Calu3 (cell line): ENCODE measurements at regions of chr5 and their contacts with region 1.

Region 1: GRCh38 chr5:116766470-116766947 is 191.9 kb upstream of the SEMA6A start:
- DNase-seq: peak; percentile 62
- H3K4me3 Mint-ChIP-seq: peak overlapping the region; percentile 35
- H3K27ac Mint-ChIP-seq: peak overlapping the region; percentile 79
- H3K4me1 Mint-ChIP-seq: peaks cover 34% of the 10 kb centered on the region
- H3K27me3 Mint-ChIP-seq: no peaks in the 10 kb centered on the region
- CTCF ChIP-seq: no peak

Region 2: DNA sequence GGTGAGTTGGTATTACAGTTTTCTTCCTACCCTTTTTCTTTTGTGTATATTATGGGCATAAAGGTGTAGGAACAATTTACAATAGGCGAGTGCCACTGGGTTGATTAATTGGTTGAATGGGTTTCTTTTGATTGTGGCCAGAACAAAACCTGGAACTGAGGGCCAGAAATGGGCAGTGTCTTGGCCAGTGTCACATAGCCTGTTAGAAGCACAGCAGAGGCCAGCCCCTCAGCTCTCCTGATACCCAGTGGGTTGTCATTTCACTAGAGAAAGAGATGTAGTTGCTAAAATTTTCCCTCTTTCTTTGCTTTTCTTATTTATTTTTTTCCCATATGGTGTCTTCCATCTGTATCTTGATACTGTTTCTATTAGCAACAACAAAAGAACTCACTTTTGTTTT is 153.1 kb before region 1 on chr5:
- CTCF ChIA-PET with region 1: no interaction called
- intact Hi-C with region 1: loop called (anchors 10 kb)
- DNase-seq: no peak
- H3K4me3 Mint-ChIP-seq: peak overlapping the region; percentile 52
- H3K27ac Mint-ChIP-seq: peak overlapping the region; percentile 96
- H3K4me1 Mint-ChIP-seq: peaks cover 42% of the 10 kb centered on the region
- H3K27me3 Mint-ChIP-seq: no peaks in the 10 kb centered on the region
- CTCF ChIP-seq: no peak

Region 3: DNA sequence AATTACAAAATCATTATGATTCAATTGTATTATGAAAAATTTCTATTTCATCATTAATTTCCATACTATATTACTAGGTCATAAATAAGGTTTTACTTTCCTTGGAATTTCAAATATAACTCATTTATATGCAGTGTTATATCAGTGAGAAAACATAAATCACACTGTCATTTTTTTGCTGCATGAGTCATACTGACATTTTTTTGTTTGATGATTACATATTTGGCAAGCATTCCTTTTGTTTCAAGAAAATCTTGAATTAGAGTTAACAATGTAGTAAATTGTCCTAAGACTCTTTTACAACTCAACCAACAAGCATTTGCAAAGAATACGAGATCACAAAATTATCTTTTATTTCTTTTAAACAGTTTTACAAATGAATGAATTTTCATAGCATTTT is 106.5 kb after region 1 on chr5:
- CTCF ChIA-PET with region 1: no interaction called
- intact Hi-C with region 1: loop called (anchors 10 kb)
- DNase-seq: no peak
- H3K4me3 Mint-ChIP-seq: no peak overlapping the region
- H3K27ac Mint-ChIP-seq: no peak overlapping the region
- H3K4me1 Mint-ChIP-seq: peaks cover 28% of the 10 kb centered on the region
- H3K27me3 Mint-ChIP-seq: no peaks in the 10 kb centered on the region
- CTCF ChIP-seq: no peak

Region 4: GRCh38 chr5:116947691-116948528 is 181.4 kb after region 1 on chr5:
- CTCF ChIA-PET with region 1: interaction called, 4 read pairs
- intact Hi-C with region 1: loop called (anchors 2 kb)
- DNase-seq: peak; percentile 87
- H3K4me3 Mint-ChIP-seq: no peak overlapping the region
- H3K27ac Mint-ChIP-seq: no peak overlapping the region
- H3K4me1 Mint-ChIP-seq: peaks cover 18% of the 10 kb centered on the region
- H3K27me3 Mint-ChIP-seq: no peaks in the 10 kb centered on the region
- CTCF ChIP-seq: peak; percentile 83